ENCODE measurements at regions of chr6 and their contacts with region 1.

Region 1: DNA sequence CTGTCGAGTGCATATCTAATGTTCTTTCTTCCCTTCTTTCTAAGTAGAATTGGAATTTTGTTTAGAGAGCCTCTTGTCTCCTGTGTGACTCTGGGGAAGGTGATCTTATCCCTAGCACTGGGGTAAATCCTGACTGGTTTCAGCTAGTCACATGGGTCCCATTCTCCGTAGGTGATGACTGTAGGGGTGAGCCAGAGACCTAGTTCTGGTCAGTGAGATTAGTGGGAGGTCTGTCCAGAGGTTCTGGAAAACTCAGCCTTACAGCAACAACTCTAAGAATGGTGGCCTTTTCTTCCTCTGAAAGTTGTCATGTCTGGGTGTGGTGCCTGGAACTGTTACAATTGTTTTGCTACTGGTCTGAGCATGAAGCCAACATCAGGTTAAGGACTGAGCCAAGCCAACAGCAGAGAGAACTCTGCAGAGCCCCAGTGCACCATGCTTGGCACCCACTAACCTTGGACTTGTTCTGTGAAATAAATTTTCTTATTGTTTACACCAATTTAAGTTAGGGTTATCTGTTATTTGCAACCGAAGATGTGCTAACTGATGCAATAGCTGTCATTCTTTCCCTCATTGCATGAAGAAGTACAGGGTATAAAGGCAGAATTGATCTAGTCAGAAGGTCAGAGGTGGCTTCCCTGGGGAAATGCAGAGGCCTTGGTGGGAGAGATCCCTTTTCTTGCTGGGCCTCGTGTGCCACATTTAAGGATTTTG is 56.8 kb upstream of the TULP4 start:
- DNase-seq: no peak
- H3K4me3 ChIP-seq: no peak overlapping the region
- H3K4me3 Mint-ChIP-seq: peak overlapping the region in 6 of 7 donors; percentile 15 to 64 (median 33)
- H3K27ac ChIP-seq: no peak overlapping the region
- H3K27ac Mint-ChIP-seq: peak overlapping the region; percentile 19 to 87 (median 77)
- H3K4me1 ChIP-seq: peaks cover 29% of the 10 kb centered on the region
- H3K4me1 Mint-ChIP-seq: peaks cover 53 to 68% (median 63%) of the 10 kb centered on the region in 3 donors
- H3K27me3 ChIP-seq: no peaks in the 10 kb centered on the region
- H3K27me3 Mint-ChIP-seq: no peaks in the 10 kb centered on the region

Region 2: DNA sequence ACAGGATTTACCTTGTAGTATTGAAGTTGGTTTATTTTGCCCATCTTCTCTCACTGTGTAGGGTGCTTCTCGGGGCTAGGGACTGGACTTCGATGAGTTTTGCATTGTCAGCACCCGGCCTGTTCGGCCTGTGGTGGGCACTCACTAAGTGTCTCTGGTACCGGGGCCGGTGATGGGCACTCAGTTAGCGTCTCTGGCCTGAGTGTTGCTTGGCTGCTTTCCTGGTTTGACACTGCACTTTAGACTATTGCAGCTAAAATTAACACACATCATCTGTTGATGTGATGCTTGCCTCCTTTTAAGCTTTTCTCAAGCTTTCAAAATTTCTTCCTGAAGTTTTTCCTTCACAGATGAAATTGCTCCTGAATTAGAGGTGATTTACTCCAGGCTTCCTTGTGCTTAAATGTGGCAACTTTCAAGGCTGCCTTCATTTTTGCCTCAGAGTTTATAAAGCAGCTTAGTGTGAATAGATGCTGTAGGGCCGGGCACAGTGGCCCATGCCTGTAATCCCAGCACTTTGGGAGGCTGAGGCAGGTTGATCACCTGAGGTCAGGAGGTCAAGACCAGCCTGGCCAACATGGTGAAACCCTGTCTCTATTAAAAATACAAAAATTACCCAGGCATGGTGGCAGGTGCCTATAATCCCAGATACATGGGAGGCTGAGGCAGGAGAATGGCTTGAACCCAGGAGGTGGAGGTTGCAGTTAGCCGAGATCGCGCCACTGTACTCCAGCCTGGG is 15.1 kb after region 1 on chr6:
- CTCF ChIA-PET with region 1: no interaction called
- POLR2A ChIA-PET with region 1: interaction called, 10 read pairs
- DNase-seq: no peak
- H3K4me3 ChIP-seq: no peak overlapping the region
- H3K4me3 Mint-ChIP-seq: peak overlapping the region in 6 of 7 donors; percentile 35 to 78 (median 46)
- H3K27ac ChIP-seq: peak overlapping the region; percentile 17
- H3K27ac Mint-ChIP-seq: peak overlapping the region; percentile 29 to 85 (median 72)
- H3K4me1 ChIP-seq: peaks cover 18% of the 10 kb centered on the region
- H3K4me1 Mint-ChIP-seq: peaks cover 31 to 39% (median 37%) of the 10 kb centered on the region in 3 donors
- H3K27me3 ChIP-seq: no peaks in the 10 kb centered on the region
- H3K27me3 Mint-ChIP-seq: no peaks in the 10 kb centered on the region

Measured in CD8-positive, alpha-beta memory T cell (primary cell).